ENCODE measurements at regions of chr11 and their contacts with region 1.

Region 1: GRCh38 chr11:6667733-6668374 is 12.2 kb upstream of the DCHS1 start:
- DNase-seq: peak; percentile 59
- ATAC-seq: peak; percentile 78
- H3K4me3 Mint-ChIP-seq: no peak overlapping the region
- H3K27ac Mint-ChIP-seq: peak overlapping the region; percentile 73
- H3K4me1 Mint-ChIP-seq: peaks cover 57% of the 10 kb centered on the region
- H3K27me3 Mint-ChIP-seq: no peaks in the 10 kb centered on the region
- CTCF ChIP-seq: peak; percentile 75

Region 2: DNA sequence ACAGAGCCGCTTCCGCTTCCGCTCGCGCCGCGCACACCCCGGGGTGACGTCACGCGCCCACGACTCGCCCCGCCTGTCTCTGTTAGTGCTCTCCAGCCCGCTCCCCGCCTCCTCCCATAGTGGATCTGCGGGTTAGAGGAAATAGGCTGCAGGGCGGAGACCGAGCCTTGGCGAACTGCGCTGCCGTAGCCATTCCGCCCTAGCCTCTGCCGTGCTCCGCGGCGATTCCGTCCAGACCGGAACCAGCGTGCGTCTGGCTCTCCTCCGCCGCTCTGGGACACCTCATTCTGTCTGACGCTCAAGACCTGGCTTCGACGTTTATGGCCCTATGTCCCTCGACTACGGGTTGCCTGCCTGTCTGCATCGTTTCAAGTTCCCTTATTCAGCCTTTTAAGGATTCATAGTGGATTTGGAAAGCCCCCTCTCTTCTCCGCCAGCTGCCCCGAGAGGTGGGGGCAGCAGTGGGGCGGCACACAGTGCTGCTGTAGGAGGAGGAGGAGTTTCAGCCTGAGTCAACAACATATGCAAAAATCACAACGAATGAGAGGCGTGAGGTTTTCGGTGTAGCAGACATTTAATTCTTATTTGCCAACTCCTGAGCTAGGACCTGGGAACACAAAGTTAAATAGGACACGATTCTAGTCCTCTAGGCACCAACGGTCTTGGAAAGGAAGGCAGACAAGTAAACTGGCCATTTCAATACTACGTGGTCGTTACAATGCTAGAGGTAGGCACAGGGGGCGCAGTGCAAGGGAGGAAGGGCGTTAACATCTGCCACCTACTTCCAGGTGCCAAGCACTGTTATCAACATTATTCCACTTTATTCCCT is 55.4 kb before region 1 on chr11 and contains the start of gene TAF10:
- CTCF ChIA-PET with region 1: interaction called, 16 read pairs
- POLR2A ChIA-PET with region 1: interaction called, 6 read pairs
- intact Hi-C with region 1: no loop called
- DNase-seq: peak; percentile 98
- ATAC-seq: peak; percentile 88
- H3K4me3 Mint-ChIP-seq: no peak within 1 kb of the TSS
- H3K27ac Mint-ChIP-seq: peak within 1 kb of the TSS; percentile 92
- H3K4me1 Mint-ChIP-seq: peaks cover 38% of the 10 kb centered on the region
- H3K27me3 Mint-ChIP-seq: no peaks in the 10 kb centered on the region
- CTCF ChIP-seq: peak; percentile 69
- total RNA-seq, gene TAF10: 151 to 160 TPM

Region 3: GRCh38 chr11:6646918-6647679 is 20.8 kb before region 1 on chr11:
- CTCF ChIA-PET with region 1: interaction called, 14 read pairs
- POLR2A ChIA-PET with region 1: interaction called, 6 read pairs
- intact Hi-C with region 1: no loop called
- DNase-seq: peak; percentile 47
- ATAC-seq: peak; percentile 46
- H3K4me3 Mint-ChIP-seq: no peak overlapping the region
- H3K27ac Mint-ChIP-seq: no peak overlapping the region
- H3K4me1 Mint-ChIP-seq: no peaks in the 10 kb centered on the region
- H3K27me3 Mint-ChIP-seq: no peaks in the 10 kb centered on the region
- CTCF ChIP-seq: no peak

Measured in activated CD8-positive, alpha-beta T cell treated with anti-CD3 and anti-CD28 coated beads for 36 hours (primary cell).